Activated B cell treated with CpG ODN at 0.5 μM for 24 hours (primary cell): ENCODE measurements at regions of chrX and their contacts with region 1.

Region 1: DNA sequence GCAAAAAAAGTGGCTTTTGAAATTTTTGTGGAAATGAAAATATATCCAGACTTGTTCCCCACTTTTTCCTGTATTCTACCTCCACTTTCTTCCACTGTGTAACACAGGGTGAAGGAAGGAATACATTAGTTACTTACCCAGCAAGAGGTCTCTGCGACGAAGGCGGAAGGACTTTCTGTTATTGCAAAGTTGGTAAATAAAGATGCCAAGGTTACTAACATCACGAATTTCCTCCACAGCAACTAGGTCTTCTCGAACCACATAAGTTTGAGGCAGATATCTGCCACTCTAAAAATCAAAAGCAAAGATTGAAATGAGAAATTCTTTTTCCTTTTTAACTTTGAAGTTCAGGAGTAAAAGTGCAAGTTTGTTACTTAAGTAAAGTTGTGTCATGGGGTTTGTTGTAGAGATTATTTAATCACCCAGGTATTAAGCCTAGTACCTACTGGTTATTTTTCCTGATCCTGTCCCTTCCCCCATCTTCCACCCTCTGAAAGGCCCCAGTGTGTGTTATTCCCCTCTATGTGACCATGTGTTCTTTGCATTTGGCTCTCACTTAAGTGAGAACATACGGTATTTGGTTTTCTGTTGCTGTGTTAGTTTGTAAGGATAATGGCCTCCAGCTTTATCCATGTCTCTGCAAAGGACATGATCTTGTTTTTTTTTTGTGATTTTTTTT is 5.8 kb downstream of the ITM2A start:
- DNase-seq: no peak
- ATAC-seq: no peak
- H3K4me3 Mint-ChIP-seq: no peak overlapping the region
- H3K27ac Mint-ChIP-seq: no peak overlapping the region
- H3K4me1 Mint-ChIP-seq: peaks cover 13% of the 10 kb centered on the region
- H3K27me3 Mint-ChIP-seq: no peaks in the 10 kb centered on the region
- CTCF ChIP-seq: no peak

Region 2: DNA sequence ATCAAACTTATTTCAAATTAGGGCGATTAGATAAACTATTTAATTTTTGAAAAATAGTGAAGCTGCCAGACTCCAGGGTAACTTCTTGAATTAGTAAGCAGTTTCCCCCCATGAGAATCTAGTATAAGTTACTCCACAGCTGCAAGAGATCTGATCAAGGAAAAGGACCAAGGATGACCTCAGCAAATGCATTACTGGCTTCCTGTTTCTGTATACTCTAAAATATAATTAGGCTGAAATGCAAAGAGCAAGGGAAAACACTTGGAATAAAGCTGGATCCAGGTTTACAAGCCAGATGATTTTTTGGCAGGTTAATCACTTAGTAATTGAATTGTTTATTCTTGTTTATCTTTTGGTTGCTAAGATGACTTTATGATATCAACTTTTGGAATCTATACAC is 429.5 kb before region 1 on chrX:
- CTCF ChIA-PET with region 1: no interaction called
- POLR2A ChIA-PET with region 1: no interaction called
- intact Hi-C with region 1: loop called (anchors 5 kb)
- DNase-seq: no peak
- ATAC-seq: no peak
- H3K4me3 Mint-ChIP-seq: no peak overlapping the region
- H3K27ac Mint-ChIP-seq: no peak overlapping the region
- H3K4me1 Mint-ChIP-seq: no peaks in the 10 kb centered on the region
- H3K27me3 Mint-ChIP-seq: no peaks in the 10 kb centered on the region
- CTCF ChIP-seq: no peak